AG04450 (cell line): ENCODE measurements at regions of chr10 and their contacts with region 1.

Region 1: DNA sequence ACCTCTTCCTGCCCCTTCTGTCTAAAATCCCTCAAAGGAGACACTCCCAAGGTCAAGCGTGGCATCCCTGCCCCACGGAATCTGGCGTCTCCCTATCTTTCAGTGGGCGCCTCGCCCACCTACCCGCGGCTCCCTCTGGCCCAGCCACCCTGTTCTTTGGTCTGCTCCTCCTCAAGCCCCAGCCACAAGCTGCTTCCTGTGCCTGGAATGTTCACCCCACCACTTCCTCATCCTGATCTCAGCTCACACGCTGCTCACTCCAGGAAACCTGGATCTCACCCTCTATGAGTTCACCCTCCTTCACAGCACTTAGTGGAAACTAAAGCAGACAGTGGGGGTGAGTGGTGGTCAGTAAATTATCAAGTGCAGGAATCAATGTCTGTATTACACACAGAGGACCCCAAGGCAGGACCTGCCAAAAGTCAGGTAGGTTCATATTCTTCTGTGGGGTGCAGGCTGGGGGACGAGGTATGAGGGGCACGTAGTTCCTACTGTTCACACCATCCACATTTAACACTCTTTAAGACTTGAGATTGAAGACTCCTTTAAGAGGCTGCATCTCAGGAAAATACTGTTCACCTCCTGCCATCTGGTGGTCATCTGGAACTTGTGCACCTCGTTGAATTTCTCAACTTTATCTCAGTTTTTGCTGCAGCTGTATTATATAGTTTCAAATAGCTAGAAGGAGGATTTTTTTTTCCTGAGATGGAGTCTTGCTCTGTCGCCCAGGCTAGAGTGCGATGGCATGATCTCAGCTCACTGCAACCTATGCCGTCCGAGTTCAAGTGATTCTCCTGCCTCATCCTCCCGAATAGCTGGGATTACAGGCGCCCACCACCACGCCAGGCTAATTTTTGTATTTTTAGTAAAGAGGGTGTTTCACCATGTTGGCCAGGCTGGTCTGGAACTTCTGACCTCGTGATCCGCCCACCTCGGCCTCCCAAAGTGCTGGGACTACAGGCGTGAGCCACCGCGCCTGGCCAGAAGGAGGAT is 166.6 kb downstream of the ARHGAP21 start:
- DNase-seq: peak; percentile 59
- H3K4me3 ChIP-seq: no peak overlapping the region
- H3K27ac ChIP-seq: no peak overlapping the region
- H3K27me3 ChIP-seq: peaks cover 16% of the 10 kb centered on the region
- CTCF ChIP-seq: peak; percentile 77

Region 2: DNA sequence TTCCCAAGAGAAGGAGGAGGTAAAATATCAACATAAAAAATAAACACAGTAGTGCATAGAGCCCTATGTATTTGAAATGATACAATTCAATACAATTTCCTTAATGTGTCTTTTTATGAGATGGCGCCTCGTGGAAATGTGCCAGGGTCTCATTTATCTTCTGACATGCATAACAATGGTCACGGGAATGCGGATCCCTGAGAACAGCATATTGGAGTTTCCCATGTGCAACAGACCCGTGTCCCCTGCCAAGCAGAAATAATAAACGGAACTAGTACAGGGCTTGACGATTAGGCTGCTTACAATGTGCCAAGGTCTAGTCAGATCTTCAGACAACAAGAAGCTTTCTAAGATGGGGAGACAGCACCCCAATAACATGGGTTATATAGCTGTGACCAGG is 51.3 kb before region 1 on chr10:
- CTCF ChIA-PET with region 1: no interaction called
- POLR2A ChIA-PET with region 1: no interaction called
- DNase-seq: no peak
- H3K4me3 ChIP-seq: no peak overlapping the region
- H3K27ac ChIP-seq: no peak overlapping the region
- H3K27me3 ChIP-seq: no peaks in the 10 kb centered on the region
- CTCF ChIP-seq: no peak

Region 3: GRCh38 chr10:24545585-24545984 is 11.5 kb before region 1 on chr10:
- CTCF ChIA-PET with region 1: interaction called, 21 read pairs
- POLR2A ChIA-PET with region 1: no interaction called
- DNase-seq: no peak
- H3K4me3 ChIP-seq: no peak overlapping the region
- H3K27ac ChIP-seq: no peak overlapping the region
- H3K27me3 ChIP-seq: no peaks in the 10 kb centered on the region
- CTCF ChIP-seq: no peak